ENCODE measurements at regions of chr7 and their contacts with region 1.

Region 1: DNA sequence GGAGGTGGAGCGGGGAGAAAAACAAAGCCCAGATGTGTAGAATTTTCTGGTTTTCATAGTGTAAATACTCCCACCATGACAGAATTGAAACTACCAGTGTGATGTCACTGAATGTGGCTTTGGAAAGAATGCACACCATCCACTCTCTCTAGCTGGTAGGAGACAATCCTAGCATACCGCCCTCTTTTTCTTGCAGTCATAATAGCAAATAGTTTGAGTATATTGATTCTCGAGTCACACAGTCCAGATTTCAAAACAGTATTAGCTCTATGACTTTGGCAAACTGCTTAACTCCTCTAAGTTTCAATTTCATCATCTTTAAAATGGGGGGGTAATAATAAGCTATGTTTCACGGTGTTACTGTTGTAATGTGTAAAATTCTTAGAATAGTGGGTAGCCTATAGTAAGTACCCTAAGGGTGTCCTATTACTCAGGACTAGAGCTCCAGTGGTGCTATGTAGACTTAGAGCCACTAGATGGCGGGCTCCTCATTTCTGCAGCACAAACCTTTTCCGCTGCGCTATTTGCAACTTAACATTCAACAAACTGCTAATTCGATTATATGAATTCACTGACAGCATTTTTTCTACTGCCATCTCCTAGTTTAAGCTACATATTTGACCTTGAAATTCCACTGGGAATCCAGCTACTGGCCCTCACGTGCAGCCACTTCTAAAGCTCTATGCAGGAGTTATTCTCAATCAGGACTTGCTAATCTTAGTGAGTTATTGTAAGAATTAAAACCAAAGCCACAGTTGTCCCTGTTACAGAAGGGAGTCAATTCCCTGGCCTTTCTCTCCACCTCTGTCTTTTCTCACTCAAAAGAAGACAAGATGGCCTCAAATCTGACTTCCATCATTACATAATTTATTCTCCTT is 18.7 kb downstream of the TAS2R40 start:
- DNase-seq: peak; percentile 70
- ATAC-seq: peak; percentile 97
- H3K4me3 ChIP-seq: no peak overlapping the region
- H3K27ac ChIP-seq: no peak overlapping the region
- H3K4me1 ChIP-seq: peaks cover 3 to 9% of the 10 kb centered on the region in 2 experiments; a peak in 3 of 4 replicates
- H3K27me3 ChIP-seq: no peaks in the 10 kb centered on the region
- CTCF ChIP-seq: peak; percentile 86 to 97 (median 93)
- POLR2A ChIP-seq: no peak
- RAD21 ChIP-seq: peak; percentile 95

Region 2: GRCh38 chr7:143255564-143255963 is 15.0 kb after region 1 on chr7:
- CTCF ChIA-PET with region 1: interaction called, 16 read pairs
- POLR2A ChIA-PET with region 1: no interaction called
- RAD21 ChIA-PET with region 1: interaction called in 1 of 2 experiments, 4 read pairs
- intact Hi-C with region 1: no loop called
- DNase-seq: no peak
- ATAC-seq: no peak
- H3K4me3 ChIP-seq: no peak overlapping the region
- H3K27ac ChIP-seq: no peak overlapping the region
- H3K4me1 ChIP-seq: peaks cover 6 to 16% of the 10 kb centered on the region in 2 experiments; a peak in 3 of 4 replicates
- H3K27me3 ChIP-seq: no peaks in the 10 kb centered on the region
- CTCF ChIP-seq: no peak
- POLR2A ChIP-seq: no peak
- RAD21 ChIP-seq: no peak

Region 3: DNA sequence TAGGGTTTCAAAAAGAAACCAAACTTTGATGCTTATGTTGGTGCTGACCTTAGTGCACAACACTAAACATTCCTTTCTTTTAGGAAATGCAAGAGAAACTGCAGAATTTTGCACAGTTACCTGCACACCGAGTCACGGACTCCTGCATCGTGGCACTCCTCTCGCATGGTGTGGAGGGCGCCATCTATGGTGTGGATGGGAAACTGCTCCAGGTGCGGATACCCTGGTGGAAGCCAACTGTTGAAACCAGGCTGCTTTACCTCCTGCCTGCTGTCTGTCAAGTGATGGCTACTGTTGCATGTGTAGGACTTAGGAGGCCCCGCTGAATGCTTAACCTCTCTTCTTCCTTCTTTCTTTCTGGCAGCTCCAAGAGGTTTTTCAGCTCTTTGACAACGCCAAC is 59.3 kb after region 1 on chr7:
- CTCF ChIA-PET with region 1: interaction called, 15 read pairs
- POLR2A ChIA-PET with region 1: no interaction called
- RAD21 ChIA-PET with region 1: no interaction called
- intact Hi-C with region 1: loop called (anchors 1 kb)
- DNase-seq: peak; percentile 23
- ATAC-seq: peak; percentile 97
- H3K4me3 ChIP-seq: no peak overlapping the region
- H3K27ac ChIP-seq: no peak overlapping the region
- H3K4me1 ChIP-seq: no peaks in the 10 kb centered on the region
- H3K27me3 ChIP-seq: no peaks in the 10 kb centered on the region
- CTCF ChIP-seq: peak; percentile 47 to 85 (median 85); a peak in 5 of 6 replicates
- POLR2A ChIP-seq: no peak
- RAD21 ChIP-seq: peak; percentile 49

Region 4: DNA sequence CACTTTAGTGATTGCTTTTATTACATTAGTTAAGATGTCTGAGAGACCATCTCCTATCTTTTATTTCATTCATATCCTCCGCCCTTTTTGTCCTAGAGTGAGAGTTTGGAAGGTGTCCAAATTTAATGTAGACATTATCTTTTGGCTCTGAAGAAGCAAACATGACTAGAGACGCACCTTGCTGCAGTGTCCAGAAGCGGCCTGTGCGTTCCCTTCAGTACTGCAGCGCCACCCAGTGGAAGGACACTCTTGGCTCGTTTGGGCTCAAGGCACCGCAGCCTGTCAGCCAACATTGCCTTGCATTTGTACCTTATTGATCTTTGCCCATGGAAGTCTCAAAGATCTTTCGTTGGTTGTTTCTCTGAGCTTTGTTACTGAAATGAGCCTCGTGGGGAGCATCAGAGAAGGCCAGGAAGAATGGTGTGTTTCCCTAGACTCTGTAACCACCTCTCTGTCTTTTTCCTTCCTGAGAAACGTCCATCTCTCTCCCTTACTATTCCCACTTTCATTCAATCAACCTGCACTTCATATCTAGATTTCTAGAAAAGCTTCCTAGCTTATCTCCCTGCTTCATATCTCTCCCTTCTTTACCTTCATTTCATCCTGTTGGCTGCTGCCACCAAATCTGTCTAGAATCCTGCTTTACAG is 65.0 kb after region 1 on chr7:
- CTCF ChIA-PET with region 1: interaction called, 4 read pairs
- POLR2A ChIA-PET with region 1: no interaction called
- RAD21 ChIA-PET with region 1: no interaction called
- intact Hi-C with region 1: loop called (anchors 1 kb)
- DNase-seq: peak; percentile 44
- ATAC-seq: peak; percentile 97
- H3K4me3 ChIP-seq: no peak overlapping the region
- H3K27ac ChIP-seq: no peak overlapping the region
- H3K4me1 ChIP-seq: no peaks in the 10 kb centered on the region
- H3K27me3 ChIP-seq: no peaks in the 10 kb centered on the region
- CTCF ChIP-seq: peak; percentile 70 to 92 (median 89)
- POLR2A ChIP-seq: no peak
- RAD21 ChIP-seq: peak; percentile 76

Measured in HCT116 (cell line).